ENCODE measurements at regions of chr9 and their contacts with region 1.

Region 1: GRCh38 chr9:5886114-5886939 is 4.4 kb upstream of the MLANA start:
- DNase-seq: no peak
- H3K4me3 ChIP-seq: no peak overlapping the region
- CTCF ChIP-seq: peak; percentile 95

Region 2: GRCh38 chr9:5851445-5851844 is 34.9 kb before region 1 on chr9:
- CTCF ChIA-PET with region 1: interaction called, 16 read pairs
- POLR2A ChIA-PET with region 1: no interaction called
- DNase-seq: no peak
- H3K4me3 ChIP-seq: no peak overlapping the region
- CTCF ChIP-seq: no peak

Region 3: DNA sequence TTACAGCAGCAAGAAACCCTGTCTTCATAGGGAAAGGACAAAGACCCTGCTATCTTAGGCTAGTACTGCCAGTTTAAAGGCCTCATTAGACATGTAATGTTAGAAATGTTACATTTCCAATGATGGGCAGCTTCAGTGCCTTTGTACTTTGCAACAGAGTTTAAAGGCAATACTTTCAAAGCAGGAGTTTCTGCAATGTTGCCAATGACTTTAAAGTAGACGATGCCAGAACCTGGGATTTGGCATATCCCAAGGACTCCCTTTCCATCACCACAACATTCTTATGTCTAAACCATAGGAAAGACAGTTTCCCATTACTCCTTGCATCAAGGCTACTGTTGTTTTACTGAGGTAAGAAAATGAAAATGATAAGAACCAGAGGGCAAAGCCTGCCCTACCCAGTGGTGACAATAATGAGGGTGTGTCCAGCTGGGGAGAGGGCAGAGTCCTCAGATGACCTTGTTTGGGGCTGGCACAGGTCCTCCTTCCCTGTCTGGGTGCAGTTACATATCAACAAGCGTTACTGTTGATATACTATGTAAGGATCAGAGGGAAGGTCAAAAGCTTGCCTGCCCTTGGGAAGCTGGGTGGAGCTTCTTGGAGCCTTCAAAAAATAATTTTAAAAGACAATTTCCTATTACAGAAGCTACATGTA is 23.1 kb before region 1 on chr9:
- CTCF ChIA-PET with region 1: interaction called, 69 read pairs
- POLR2A ChIA-PET with region 1: no interaction called
- DNase-seq: no peak
- H3K4me3 ChIP-seq: no peak overlapping the region
- CTCF ChIP-seq: no peak

Region 4: GRCh38 chr9:5899292-5899691 is 13.0 kb after region 1 on chr9:
- CTCF ChIA-PET with region 1: interaction called, 58 read pairs
- POLR2A ChIA-PET with region 1: no interaction called
- DNase-seq: no peak
- H3K4me3 ChIP-seq: no peak overlapping the region
- CTCF ChIP-seq: no peak

Region 5: GRCh38 chr9:5988265-5988664 is 101.9 kb after region 1 on chr9:
- CTCF ChIA-PET with region 1: no interaction called
- POLR2A ChIA-PET with region 1: no interaction called
- DNase-seq: no peak
- H3K4me3 ChIP-seq: no peak overlapping the region
- CTCF ChIP-seq: no peak

Region 6: GRCh38 chr9:6055213-6055612 is 168.9 kb after region 1 on chr9:
- CTCF ChIA-PET with region 1: interaction called, 118 read pairs
- POLR2A ChIA-PET with region 1: no interaction called
- DNase-seq: peak; percentile 61
- H3K4me3 ChIP-seq: no peak overlapping the region
- CTCF ChIP-seq: peak; percentile 24